Endothelial cell of umbilical vein (primary cell): ENCODE measurements at regions of chr2 and their contacts with region 1.

Region 1: GRCh38 chr2:232300894-232301387 is 77.6 kb upstream of the ALPP start:
- DNase-seq: peak; percentile 83
- H3K4me3 ChIP-seq: no peak overlapping the region
- H3K27ac ChIP-seq: peak overlapping the region; percentile 82
- H3K4me1 ChIP-seq: peaks cover 14% of the 10 kb centered on the region
- H3K27me3 ChIP-seq: no peaks in the 10 kb centered on the region
- CTCF ChIP-seq: no peak
- POLR2A ChIP-seq: no peak

Region 2: DNA sequence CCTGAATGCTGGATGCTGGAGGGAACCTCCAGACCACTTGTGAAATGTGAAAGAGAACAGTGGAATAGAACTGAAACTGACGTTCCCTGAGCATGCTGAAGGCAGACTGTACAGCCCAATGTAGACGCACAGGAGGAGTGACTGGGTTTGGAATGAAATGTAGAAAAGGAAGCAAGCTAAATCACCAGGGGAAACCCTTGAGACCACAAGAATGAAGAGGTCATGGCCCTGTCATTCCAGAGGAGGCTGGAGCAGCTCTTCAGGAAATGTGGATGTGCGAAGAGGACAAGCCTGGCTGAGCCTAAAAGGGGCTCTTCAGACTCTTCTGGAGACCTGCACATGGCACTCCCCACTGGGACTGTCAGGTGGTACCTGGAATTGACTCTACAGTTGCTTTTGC is 40.9 kb before region 1 on chr2:
- CTCF ChIA-PET with region 1: no interaction called
- POLR2A ChIA-PET with region 1: interaction called, 9 read pairs
- dilution Hi-C with region 1: no loop called
- intact Hi-C with region 1: loop called (anchors 2 kb)
- DNase-seq: peak; percentile 84
- H3K4me3 ChIP-seq: peak overlapping the region in 1 of 3 experiments; percentile 17
- H3K27ac ChIP-seq: peak overlapping the region; percentile 30
- H3K4me1 ChIP-seq: peaks cover 22% of the 10 kb centered on the region
- H3K27me3 ChIP-seq: no peaks in the 10 kb centered on the region
- CTCF ChIP-seq: no peak
- POLR2A ChIP-seq: no peak

Region 3: GRCh38 chr2:232276733-232277313 is 24.1 kb before region 1 on chr2:
- CTCF ChIA-PET with region 1: no interaction called
- POLR2A ChIA-PET with region 1: no interaction called
- dilution Hi-C with region 1: no loop called
- intact Hi-C with region 1: no loop called
- DNase-seq: no peak
- H3K4me3 ChIP-seq: no peak overlapping the region
- H3K27ac ChIP-seq: no peak overlapping the region
- H3K4me1 ChIP-seq: no peaks in the 10 kb centered on the region
- H3K27me3 ChIP-seq: no peaks in the 10 kb centered on the region
- CTCF ChIP-seq: no peak
- POLR2A ChIP-seq: no peak